ENCODE measurements at regions of chr16 and their contacts with region 1.

Region 1: GRCh38 chr16:46748775-46749705 is 896 bp upstream of the MYLK3 start:
- DNase-seq: peak; percentile 79 to 92 (median 82)
- ATAC-seq: peak; percentile 58 to 76 (median 65)
- H3K4me3 ChIP-seq: peak overlapping the region in 8 of 12 donors; percentile 18 to 64 (median 46)
- H3K27ac ChIP-seq: peak overlapping the region; percentile 47 to 100 (median 92)
- H3K4me1 ChIP-seq: peaks cover 0 to 48% (median 11%) of the 10 kb centered on the region in 12 donors
- H3K27me3 ChIP-seq: no peaks in the 10 kb centered on the region
- CTCF ChIP-seq: no peak
- POLR2A ChIP-seq: no peak

Region 2: GRCh38 chr16:46696957-46697356 is 52.1 kb before region 1 on chr16:
- intact Hi-C with region 1: loop called in 3 of 10 experiments (anchors 5 to 10 kb)
- DNase-seq: no peak
- ATAC-seq: peak; percentile 32 to 72 (median 56)
- H3K4me3 ChIP-seq: no peak overlapping the region
- H3K27ac ChIP-seq: peak overlapping the region in 11 of 12 donors; percentile 2 to 60 (median 41)
- H3K4me1 ChIP-seq: peaks cover 0 to 22% (median 5%) of the 10 kb centered on the region in 12 donors
- H3K27me3 ChIP-seq: no peaks in the 10 kb centered on the region
- CTCF ChIP-seq: no peak
- POLR2A ChIP-seq: no peak

Region 3: GRCh38 chr16:46801428-46802049 is 52.5 kb after region 1 on chr16:
- intact Hi-C with region 1: loop called in 1 of 10 experiments (anchors 1 kb)
- DNase-seq: no peak
- ATAC-seq: peak in 2 of 4 donors; percentile 55 to 56
- H3K4me3 ChIP-seq: no peak overlapping the region
- H3K27ac ChIP-seq: no peak overlapping the region
- H3K4me1 ChIP-seq: no peaks in the 10 kb centered on the region
- H3K27me3 ChIP-seq: no peaks in the 10 kb centered on the region
- CTCF ChIP-seq: peak; percentile 19 to 60 (median 50)
- POLR2A ChIP-seq: no peak

Region 4: GRCh38 chr16:46822270-46822669 is 73.2 kb after region 1 on chr16:
- intact Hi-C with region 1: no loop called
- DNase-seq: no peak
- ATAC-seq: no peak
- H3K4me3 ChIP-seq: no peak overlapping the region
- H3K27ac ChIP-seq: no peak overlapping the region
- H3K4me1 ChIP-seq: peaks cover 0 to 14% (median 0%) of the 10 kb centered on the region in 12 donors
- H3K27me3 ChIP-seq: no peaks in the 10 kb centered on the region
- CTCF ChIP-seq: no peak
- POLR2A ChIP-seq: no peak